ENCODE measurements at regions of chr7 and their contacts with region 1.

Region 1: DNA sequence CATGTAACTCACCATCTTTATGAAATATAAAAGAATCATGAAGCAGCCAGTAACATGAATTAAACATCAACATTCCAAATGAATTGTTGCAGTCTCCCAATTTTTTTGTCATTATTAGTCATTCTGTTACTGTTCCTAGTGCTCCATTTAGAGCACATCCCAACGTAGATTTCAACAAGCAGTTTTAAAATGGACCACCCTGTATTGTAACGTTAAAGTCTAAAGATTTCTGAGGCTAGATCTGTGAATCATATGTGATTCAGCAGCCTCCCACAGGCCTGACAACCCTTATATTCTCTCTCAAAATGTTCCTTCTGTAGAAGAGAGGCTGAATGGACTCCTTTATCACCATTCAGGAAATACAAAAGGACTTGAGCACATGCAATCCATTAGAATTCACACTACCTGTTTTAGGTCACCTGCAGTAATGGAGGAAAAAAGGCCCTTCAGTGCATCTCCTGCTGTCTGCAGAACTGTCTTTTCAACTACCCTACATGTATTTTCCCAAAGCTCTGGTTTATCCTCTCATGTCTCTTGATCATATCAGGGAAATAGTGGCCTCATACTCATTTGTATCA is 81.4 kb downstream of the CACNA2D1 start:
- DNase-seq: no peak
- H3K4me3 ChIP-seq: no peak overlapping the region
- H3K27ac ChIP-seq: no peak overlapping the region
- H3K4me1 ChIP-seq: no peaks in the 10 kb centered on the region
- H3K27me3 ChIP-seq: no peaks in the 10 kb centered on the region
- CTCF ChIP-seq: no peak
- EP300 ChIP-seq: no peak
- POLR2A ChIP-seq: no peak

Region 2: GRCh38 chr7:82294382-82294784 is 67.8 kb before region 1 on chr7:
- intact Hi-C with region 1: loop called in 1 of 4 experiments (anchors 2 kb)
- DNase-seq: no peak
- H3K4me3 ChIP-seq: no peak overlapping the region
- H3K27ac ChIP-seq: no peak overlapping the region
- H3K4me1 ChIP-seq: no peaks in the 10 kb centered on the region
- H3K27me3 ChIP-seq: no peaks in the 10 kb centered on the region
- CTCF ChIP-seq: no peak
- EP300 ChIP-seq: no peak
- POLR2A ChIP-seq: no peak